Activated T-helper 2 cell treated with anti-CD3 and anti-CD28 coated beads, Interferon-gamma antibody, Interleukin-2, Interleukin-4, amounts not matched to agents 10 μg/mL and 5 μg/mL and 100 μg/mL, durations not matched to agents 14 hours and 24 hours and 36 hours (primary cell): ENCODE measurements at regions of chr1 and their contacts with region 1.

Region 1: DNA sequence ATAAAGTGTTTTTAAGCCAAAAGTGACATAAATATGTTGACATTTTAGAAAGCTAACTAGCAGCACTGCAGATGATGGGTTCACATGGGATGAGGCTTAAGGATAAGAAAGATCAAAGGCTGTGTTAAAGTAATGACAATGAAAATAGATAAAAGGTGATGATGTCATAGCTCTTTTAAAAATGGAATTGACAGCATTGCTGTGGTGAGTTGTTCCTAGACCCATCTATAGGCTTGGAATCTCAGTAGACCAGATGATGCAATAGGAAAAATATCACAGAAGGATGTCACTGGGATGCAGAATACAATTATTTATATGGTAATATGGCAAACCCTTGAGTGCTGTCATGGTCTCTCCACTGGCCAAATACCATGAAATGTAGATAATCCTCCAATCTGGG is 286.0 kb downstream of the PLA2G4A start:
- DNase-seq: no peak
- H3K4me3 Mint-ChIP-seq: no peak overlapping the region
- H3K27ac Mint-ChIP-seq: no peak overlapping the region
- H3K4me1 Mint-ChIP-seq: no peaks in the 10 kb centered on the region
- H3K27me3 Mint-ChIP-seq: no peaks in the 10 kb centered on the region

Region 2: GRCh38 chr1:187103354-187103753 is 11.4 kb before region 1 on chr1:
- intact Hi-C with region 1: loop called (anchors 1 kb)
- DNase-seq: no peak
- H3K4me3 Mint-ChIP-seq: no peak overlapping the region
- H3K27ac Mint-ChIP-seq: no peak overlapping the region
- H3K4me1 Mint-ChIP-seq: no peaks in the 10 kb centered on the region
- H3K27me3 Mint-ChIP-seq: no peaks in the 10 kb centered on the region

Region 3: DNA sequence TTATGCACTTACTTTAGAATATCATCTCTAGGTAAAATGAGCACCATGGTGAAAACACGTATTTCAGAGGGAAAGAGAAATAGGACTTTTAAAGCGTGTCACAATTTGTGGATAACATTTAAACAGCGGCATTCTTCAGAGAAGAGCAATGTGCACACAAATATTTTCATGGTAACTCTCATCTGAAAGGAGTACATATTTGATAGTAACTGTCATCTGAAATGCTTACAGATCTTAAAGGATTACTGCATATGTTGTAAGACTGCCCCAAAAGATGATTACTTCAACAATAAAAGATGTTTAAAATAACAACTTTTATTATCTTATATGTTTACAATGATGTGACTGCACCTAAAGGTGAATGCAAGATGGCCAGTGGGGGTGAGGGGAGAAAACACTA is 122.8 kb after region 1 on chr1:
- intact Hi-C with region 1: no loop called
- DNase-seq: no peak
- H3K4me3 Mint-ChIP-seq: no peak overlapping the region
- H3K27ac Mint-ChIP-seq: no peak overlapping the region
- H3K4me1 Mint-ChIP-seq: no peaks in the 10 kb centered on the region
- H3K27me3 Mint-ChIP-seq: no peaks in the 10 kb centered on the region